Aorta (tissue), 5 donors: ENCODE measurements at regions of chr3 and their contacts with region 1.

Region 1: GRCh38 chr3:99866261-99866761 is 48.6 kb downstream of the CMSS1 start:
- DNase-seq: no peak
- ATAC-seq: no peak
- H3K4me3 ChIP-seq: peak overlapping the region; percentile 31 to 59
- H3K27ac ChIP-seq: peak overlapping the region; percentile 51 to 93
- H3K4me1 ChIP-seq: peaks cover 9 to 22% of the 10 kb centered on the region in 2 donors
- H3K27me3 ChIP-seq: no peaks in the 10 kb centered on the region

Region 2: DNA sequence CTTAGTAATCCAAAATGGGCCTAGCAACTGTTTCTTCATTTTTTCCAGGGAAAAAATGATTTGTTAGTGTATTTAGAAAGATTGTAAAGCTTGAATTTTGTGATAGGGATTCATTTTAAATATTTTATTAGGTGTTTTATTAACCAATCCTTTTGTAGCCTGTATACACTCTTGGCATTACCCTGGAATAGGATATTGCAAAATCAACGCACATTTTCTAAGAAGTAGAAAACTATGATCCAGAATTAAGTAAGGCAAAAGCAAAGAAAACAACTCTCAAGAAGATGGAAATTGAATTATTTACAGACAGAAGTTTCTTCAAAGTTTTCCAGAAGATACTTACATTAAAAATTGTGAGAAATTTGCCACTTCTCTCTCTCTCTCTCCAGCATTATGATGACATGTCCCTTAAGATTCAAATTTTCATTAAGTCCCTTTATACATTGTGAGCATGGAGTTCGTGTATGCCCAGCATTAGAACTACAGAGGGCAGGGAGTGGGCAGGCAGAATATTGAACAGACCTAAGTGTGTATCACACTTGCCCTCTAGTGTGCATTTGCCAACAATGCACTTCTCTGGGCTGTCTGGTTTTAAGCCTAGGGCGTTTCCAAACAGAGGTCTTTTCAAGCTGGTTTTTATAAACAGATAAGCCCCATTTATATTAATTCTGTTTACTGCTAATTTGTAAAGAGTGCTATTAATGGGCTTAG is 77.1 kb before region 1 on chr3:
- intact Hi-C with region 1: no loop called
- DNase-seq: no peak
- ATAC-seq: peak; percentile 89
- H3K4me3 ChIP-seq: no peak overlapping the region
- H3K27ac ChIP-seq: no peak overlapping the region
- H3K4me1 ChIP-seq: no peaks in the 10 kb centered on the region
- H3K27me3 ChIP-seq: no peaks in the 10 kb centered on the region

Region 3: DNA sequence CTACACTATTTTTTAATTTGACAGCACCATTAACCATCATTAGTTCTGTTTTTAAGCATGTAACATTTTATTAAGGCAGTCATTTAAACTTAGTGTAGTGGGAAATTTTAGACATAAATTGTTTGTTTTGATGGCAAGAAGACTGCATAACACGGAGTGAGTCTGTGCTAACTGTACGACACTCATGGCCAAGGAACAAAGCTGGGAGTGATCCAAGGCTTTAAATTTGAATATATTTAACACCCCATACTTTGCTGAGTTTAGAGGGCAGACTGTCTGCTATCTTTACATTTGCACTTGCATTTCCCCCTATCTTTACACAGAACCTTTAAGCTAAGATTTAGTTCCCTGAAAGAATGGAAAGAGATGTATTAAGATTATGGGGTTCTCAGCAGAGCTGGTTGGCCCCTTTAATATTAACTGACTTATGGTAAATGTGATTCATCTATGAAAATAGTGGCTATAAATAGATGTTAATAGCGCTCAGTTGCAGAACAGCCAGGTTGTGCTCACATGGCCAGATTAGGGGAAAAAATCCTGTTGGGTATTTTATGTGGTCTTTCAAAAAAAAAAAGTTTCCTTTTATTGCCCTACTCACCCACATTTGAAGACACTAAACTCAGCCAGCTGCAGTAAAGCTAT is 72.1 kb after region 1 on chr3:
- intact Hi-C with region 1: loop called (anchors 5 kb)
- DNase-seq: no peak
- ATAC-seq: peak; percentile 55
- H3K4me3 ChIP-seq: no peak overlapping the region
- H3K27ac ChIP-seq: peak overlapping the region; percentile 80 to 100
- H3K4me1 ChIP-seq: peaks cover 9 to 20% of the 10 kb centered on the region in 2 donors
- H3K27me3 ChIP-seq: no peaks in the 10 kb centered on the region